ENCODE measurements at regions of chr12 and their contacts with region 1.

Region 1: DNA sequence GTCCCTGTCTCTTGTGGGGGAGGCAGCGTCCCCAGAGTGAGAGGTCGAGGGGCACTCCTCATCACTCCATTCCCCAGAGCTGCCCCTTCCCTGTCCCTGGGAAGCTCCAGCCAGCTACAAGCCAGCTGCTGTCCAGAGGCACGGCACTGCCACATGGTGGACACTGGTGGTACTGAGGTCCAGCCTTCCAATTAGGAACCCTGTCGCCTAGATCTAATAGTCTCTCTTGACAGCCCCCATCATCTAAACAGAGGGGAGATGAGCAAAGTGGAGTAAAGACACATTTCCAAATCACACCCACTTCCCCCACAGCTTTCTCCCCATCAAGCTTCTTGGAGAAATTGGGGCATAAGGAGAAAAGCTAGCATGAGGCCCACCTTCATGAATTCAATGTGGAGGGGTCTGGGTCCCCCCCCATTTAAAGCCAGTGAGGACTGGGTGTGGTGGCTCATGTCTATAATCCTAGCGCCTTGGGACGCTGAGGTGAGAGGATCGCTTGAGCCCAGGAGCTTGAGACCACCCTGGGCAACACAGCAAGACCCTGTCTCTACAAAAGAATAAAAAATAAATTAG is 2.1 kb upstream of the INHBE start:
- DNase-seq: peak; percentile 75
- H3K4me3 ChIP-seq: no peak overlapping the region
- H3K27ac ChIP-seq: no peak overlapping the region
- H3K4me1 ChIP-seq: peaks cover 3% of the 10 kb centered on the region
- H3K27me3 ChIP-seq: no peaks in the 10 kb centered on the region
- CTCF ChIP-seq: peak; percentile 85 to 93
- POLR2A ChIP-seq: no peak

Region 2: DNA sequence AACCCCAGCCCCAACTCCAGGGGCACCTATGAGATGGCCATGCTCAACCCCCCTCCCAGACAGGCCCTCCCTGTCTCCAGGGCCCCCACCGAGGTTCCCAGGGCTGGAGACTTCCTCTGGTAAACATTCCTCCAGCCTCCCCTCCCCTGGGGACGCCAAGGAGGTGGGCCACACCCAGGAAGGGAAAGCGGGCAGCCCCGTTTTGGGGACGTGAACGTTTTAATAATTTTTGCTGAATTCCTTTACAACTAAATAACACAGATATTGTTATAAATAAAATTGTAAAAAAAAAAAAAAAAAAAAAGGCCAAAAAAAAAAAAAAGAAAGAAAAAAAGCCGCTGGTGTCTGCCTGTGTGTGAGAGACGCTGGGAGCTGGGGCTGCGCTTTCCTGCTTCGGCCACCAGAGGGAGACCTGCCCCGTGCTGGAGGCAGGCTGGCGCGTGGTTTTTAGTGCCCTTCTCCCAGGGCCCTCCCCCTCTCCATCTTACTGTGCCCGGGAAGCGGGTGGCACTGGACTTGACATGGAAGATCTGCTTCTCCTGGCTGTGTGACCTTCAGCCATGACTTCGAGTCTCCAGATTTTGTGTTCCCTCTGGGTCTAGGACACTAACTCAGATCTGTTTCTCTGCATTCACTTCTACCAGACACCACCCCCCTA is 239.8 kb before region 1 on chr12:
- CTCF ChIA-PET with region 1: interaction called, 8 read pairs
- POLR2A ChIA-PET with region 1: no interaction called
- dilution Hi-C with region 1: no loop called
- intact Hi-C with region 1: loop called (anchors 1 kb)
- DNase-seq: peak; percentile 82
- H3K4me3 ChIP-seq: no peak overlapping the region
- H3K27ac ChIP-seq: no peak overlapping the region
- H3K4me1 ChIP-seq: peaks cover 2% of the 10 kb centered on the region
- H3K27me3 ChIP-seq: peaks cover 37 to 42% of the 10 kb centered on the region in 2 experiments
- CTCF ChIP-seq: peak; percentile 96 to 98
- POLR2A ChIP-seq: no peak

Region 3: DNA sequence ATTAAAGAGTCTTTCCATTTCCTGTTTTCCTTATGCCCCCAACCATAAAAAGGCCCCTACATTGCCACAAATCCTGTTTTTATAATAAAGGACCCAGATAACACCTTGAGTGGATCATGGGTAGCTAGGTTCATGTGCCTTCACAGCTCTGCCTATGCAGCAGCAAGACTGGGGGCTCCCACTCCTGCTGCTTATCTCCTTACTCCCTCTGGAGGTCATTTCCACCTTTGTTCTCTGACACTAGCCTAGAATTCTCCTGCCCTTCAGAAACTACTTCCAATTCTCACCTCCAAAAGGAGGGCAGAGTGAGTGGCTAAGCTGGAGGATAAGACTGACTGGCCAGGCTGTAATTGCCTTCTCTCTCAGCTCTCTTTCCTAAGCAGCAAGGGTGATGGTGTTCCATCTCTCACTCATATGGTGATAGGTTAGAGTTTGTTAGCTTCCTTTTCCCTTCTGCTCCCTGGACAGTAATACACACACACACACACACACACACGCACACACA is 182.0 kb before region 1 on chr12:
- CTCF ChIA-PET with region 1: interaction called, 82 read pairs
- POLR2A ChIA-PET with region 1: no interaction called
- dilution Hi-C with region 1: no loop called
- intact Hi-C with region 1: no loop called
- DNase-seq: peak; percentile 14
- H3K4me3 ChIP-seq: no peak overlapping the region
- H3K27ac ChIP-seq: no peak overlapping the region
- H3K4me1 ChIP-seq: peaks cover 10% of the 10 kb centered on the region
- H3K27me3 ChIP-seq: no peaks in the 10 kb centered on the region
- CTCF ChIP-seq: no peak
- POLR2A ChIP-seq: no peak

Region 4: GRCh38 chr12:57299514-57300016 is 153.5 kb before region 1 on chr12:
- CTCF ChIA-PET with region 1: interaction called, 394 read pairs
- POLR2A ChIA-PET with region 1: no interaction called
- dilution Hi-C with region 1: no loop called
- intact Hi-C with region 1: no loop called
- DNase-seq: no peak
- H3K4me3 ChIP-seq: no peak overlapping the region
- H3K27ac ChIP-seq: no peak overlapping the region
- H3K4me1 ChIP-seq: no peaks in the 10 kb centered on the region
- H3K27me3 ChIP-seq: no peaks in the 10 kb centered on the region
- CTCF ChIP-seq: no peak
- POLR2A ChIP-seq: no peak

Region 5: GRCh38 chr12:57342207-57342691 is 110.8 kb before region 1 on chr12:
- CTCF ChIA-PET with region 1: interaction called, 12 read pairs
- POLR2A ChIA-PET with region 1: no interaction called
- dilution Hi-C with region 1: no loop called
- intact Hi-C with region 1: no loop called
- DNase-seq: peak; percentile 5
- H3K4me3 ChIP-seq: no peak overlapping the region
- H3K27ac ChIP-seq: no peak overlapping the region
- H3K4me1 ChIP-seq: no peaks in the 10 kb centered on the region
- H3K27me3 ChIP-seq: no peaks in the 10 kb centered on the region
- CTCF ChIP-seq: no peak
- POLR2A ChIP-seq: no peak

Region 6: GRCh38 chr12:57430931-57431720 is 21.9 kb before region 1 on chr12 and contains the start of gene R3HDM2:
- CTCF ChIA-PET with region 1: interaction called, 12 read pairs
- POLR2A ChIA-PET with region 1: no interaction called
- dilution Hi-C with region 1: no loop called
- intact Hi-C with region 1: loop called (anchors 2 kb)
- DNase-seq: peak; percentile 95
- H3K4me3 ChIP-seq: peak within 1 kb of the TSS; percentile 46 to 75 (median 69)
- H3K27ac ChIP-seq: peak within 1 kb of the TSS; percentile 64
- H3K4me1 ChIP-seq: peaks cover 6% of the 10 kb centered on the region
- H3K27me3 ChIP-seq: no peaks in the 10 kb centered on the region
- CTCF ChIP-seq: no peak
- POLR2A ChIP-seq: peak; percentile 96
- total RNA-seq, gene R3HDM2: 31.3 and 36.6 TPM in 2 replicates

Measured in endothelial cell of umbilical vein (primary cell).